ENCODE measurements at regions of chr18 and their contacts with region 1.

Region 1: DNA sequence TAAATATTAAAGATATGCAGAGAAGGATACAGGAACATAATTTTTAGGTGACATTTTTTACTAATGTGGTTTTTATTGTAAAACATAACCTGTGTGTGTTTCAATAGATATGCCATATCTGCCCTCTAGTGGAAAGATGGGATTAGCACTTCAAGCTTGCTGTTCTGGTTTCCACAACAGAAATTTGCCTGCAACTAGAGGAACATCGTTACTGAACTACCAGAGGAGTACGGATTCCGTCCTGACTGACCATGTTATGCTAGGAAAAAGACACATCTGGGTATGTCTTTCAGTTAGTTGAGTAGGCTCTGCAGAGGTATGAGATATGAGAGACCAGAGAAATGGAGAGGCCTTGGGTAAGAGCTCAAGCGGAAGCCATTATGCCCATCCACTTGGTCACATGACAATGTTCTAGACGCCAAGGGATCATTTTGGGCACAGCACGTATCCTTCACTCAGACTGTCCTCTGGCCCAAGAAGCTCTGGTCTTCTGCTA is 104.9 kb downstream of the MBD2 start:
- DNase-seq: peak; percentile 60
- H3K4me3 ChIP-seq: no peak overlapping the region
- H3K27ac ChIP-seq: no peak overlapping the region
- H3K4me1 ChIP-seq: no peaks in the 10 kb centered on the region
- CTCF ChIP-seq: peak; percentile 83

Region 2: DNA sequence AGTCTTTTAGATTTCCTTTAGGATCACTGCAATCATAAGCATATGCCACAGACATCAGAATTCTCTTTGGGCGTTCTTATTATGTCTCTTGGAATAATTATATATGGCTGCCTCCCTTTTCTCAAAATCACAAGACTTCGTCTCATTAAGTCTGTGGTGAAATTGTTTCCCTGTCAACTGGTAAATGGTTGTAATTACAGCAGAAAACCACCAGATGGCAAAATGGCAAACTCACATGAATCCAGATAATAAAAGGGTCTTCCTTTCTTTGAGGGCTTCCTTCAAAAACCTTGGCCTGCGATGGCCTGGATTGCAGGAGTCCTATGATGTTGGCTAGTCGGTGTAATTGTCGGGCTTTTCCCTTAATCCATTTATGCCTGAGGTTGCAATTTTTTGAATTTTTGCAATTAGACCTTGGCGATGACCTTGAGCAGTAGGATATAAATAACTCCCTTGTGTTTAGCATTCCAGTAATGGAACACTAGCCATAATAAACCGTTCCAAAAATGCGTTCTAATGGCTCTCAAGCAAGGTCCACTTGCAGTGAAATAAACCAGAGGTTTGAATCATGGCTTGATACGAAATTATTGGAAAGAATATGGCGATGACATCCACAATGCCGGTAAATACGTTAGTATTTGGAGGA is 551.5 kb before region 1 on chr18:
- CTCF ChIA-PET with region 1: no interaction called
- POLR2A ChIA-PET with region 1: no interaction called
- intact Hi-C with region 1: loop called (anchors 5 kb)
- DNase-seq: peak; percentile 16
- H3K4me3 ChIP-seq: no peak overlapping the region
- H3K27ac ChIP-seq: no peak overlapping the region
- H3K4me1 ChIP-seq: no peaks in the 10 kb centered on the region
- CTCF ChIP-seq: peak; percentile 70

Region 3: DNA sequence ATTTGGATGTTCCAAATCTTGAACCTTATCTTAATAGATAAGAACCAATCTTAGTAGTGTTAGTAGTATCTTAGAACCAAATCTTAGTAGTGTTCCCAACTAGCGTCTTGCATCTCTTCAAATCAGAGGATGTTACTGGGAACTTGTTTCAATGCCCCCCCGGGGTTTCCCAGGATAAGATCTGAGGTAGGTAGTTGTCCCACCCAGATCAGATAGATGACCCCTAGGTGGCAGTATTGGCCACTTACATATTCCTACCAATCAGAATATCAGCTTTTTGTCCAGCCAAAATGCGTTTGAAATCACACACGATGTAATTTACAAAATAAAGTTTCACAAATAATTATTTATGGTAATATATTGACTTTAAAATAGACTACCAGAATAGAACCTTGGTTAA is 209.9 kb before region 1 on chr18:
- CTCF ChIA-PET with region 1: no interaction called
- POLR2A ChIA-PET with region 1: no interaction called
- intact Hi-C with region 1: loop called (anchors 5 kb)
- DNase-seq: peak; percentile 41
- H3K4me3 ChIP-seq: no peak overlapping the region
- H3K27ac ChIP-seq: no peak overlapping the region
- H3K4me1 ChIP-seq: no peaks in the 10 kb centered on the region
- CTCF ChIP-seq: peak; percentile 79

Measured in OCI-LY7 (cell line).